Activated CD4-positive, alpha-beta T cell treated with anti-CD3 and anti-CD28 coated beads, Interleukin-2, amount 10 ng/mL, durations not matched to agents 24 days and 14 days (primary cell): ENCODE measurements at regions of chr3 and their contacts with region 1.

Region 1: GRCh38 chr3:49703443-49703927 is 14.1 kb downstream of the RNF123 start:
- DNase-seq: peak; percentile 91
- H3K4me3 Mint-ChIP-seq: no peak overlapping the region
- H3K27ac Mint-ChIP-seq: no peak overlapping the region
- H3K4me1 Mint-ChIP-seq: peaks cover 2% of the 10 kb centered on the region
- H3K27me3 Mint-ChIP-seq: no peaks in the 10 kb centered on the region

Region 2: GRCh38 chr3:49839193-49839809 is 135.8 kb after region 1 on chr3:
- intact Hi-C with region 1: loop called (anchors 1 kb)
- DNase-seq: peak; percentile 94
- H3K4me3 Mint-ChIP-seq: no peak overlapping the region
- H3K27ac Mint-ChIP-seq: no peak overlapping the region
- H3K4me1 Mint-ChIP-seq: peaks cover 3% of the 10 kb centered on the region
- H3K27me3 Mint-ChIP-seq: no peaks in the 10 kb centered on the region

Region 3: DNA sequence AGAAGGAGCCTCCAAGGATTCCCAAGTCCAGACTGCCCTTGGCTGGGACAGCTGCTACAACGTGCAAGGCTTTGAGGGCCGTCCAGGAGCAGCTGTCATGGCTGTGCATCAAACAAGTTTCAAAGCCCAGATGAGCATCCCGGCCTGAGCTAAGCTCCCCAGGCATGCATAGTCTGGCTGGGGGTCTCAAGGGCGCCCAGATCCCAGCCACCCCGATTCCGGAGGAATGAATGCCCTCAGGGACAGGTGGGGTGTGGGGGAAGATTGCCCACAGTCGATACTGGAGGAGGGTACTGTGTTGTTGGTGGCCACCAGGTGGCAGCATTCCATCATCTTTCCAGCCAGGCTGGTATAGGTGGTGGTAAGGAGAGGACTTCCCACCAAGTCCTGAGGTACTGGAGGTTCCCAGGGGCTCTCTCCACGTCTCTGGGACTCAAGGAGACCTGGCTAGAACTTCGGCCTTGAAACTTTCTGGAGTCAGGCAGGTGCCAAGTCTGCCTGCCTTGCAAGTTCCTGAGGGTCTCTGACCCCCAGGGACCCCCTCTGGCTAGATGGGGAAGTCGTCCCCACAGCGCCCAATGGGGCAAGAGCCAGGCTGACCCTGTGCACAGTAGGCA is 418.0 kb after region 1 on chr3:
- intact Hi-C with region 1: no loop called
- DNase-seq: peak; percentile 89
- H3K4me3 Mint-ChIP-seq: no peak overlapping the region
- H3K27ac Mint-ChIP-seq: no peak overlapping the region
- H3K4me1 Mint-ChIP-seq: no peaks in the 10 kb centered on the region
- H3K27me3 Mint-ChIP-seq: no peaks in the 10 kb centered on the region